ENCODE measurements at regions of chr5 and their contacts with region 1.

Region 1: GRCh38 chr5:121218086-121218485 is 633.6 kb upstream of the FTMT start:
- DNase-seq: no peak
- H3K4me3 ChIP-seq: no peak overlapping the region
- H3K27ac ChIP-seq: no peak overlapping the region
- H3K4me1 ChIP-seq: no peaks in the 10 kb centered on the region
- H3K27me3 ChIP-seq: no peaks in the 10 kb centered on the region
- CTCF ChIP-seq: no peak
- EP300 ChIP-seq: no peak
- POLR2A ChIP-seq: no peak

Region 2: GRCh38 chr5:121239951-121240350 is 21.9 kb after region 1 on chr5:
- intact Hi-C with region 1: loop called (anchors 2 kb)
- DNase-seq: no peak
- H3K4me3 ChIP-seq: no peak overlapping the region
- H3K27ac ChIP-seq: no peak overlapping the region
- H3K4me1 ChIP-seq: no peaks in the 10 kb centered on the region
- H3K27me3 ChIP-seq: no peaks in the 10 kb centered on the region
- CTCF ChIP-seq: no peak
- EP300 ChIP-seq: no peak
- POLR2A ChIP-seq: no peak

Region 3: DNA sequence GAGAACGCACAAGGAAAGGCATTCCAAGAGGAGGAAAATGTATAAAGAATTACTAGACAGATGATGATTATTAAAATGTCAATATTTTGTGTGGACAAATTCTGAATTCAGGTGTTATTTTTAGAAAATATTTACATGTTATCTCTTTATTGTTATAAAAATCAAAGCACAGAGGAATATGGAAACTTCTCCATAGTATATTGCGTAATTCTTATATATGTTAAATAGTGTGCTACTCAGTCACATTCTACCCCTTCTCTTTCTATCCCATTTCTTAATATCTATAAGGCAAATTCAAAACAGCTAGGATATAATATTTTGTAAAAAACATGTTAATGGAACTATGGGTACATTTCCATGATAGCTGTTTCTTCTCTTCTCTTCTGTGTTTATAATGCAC is 86.7 kb after region 1 on chr5:
- intact Hi-C with region 1: no loop called
- DNase-seq: no peak
- H3K4me3 ChIP-seq: no peak overlapping the region
- H3K27ac ChIP-seq: no peak overlapping the region
- H3K4me1 ChIP-seq: no peaks in the 10 kb centered on the region
- H3K27me3 ChIP-seq: no peaks in the 10 kb centered on the region
- CTCF ChIP-seq: no peak
- EP300 ChIP-seq: no peak
- POLR2A ChIP-seq: no peak

Region 4: DNA sequence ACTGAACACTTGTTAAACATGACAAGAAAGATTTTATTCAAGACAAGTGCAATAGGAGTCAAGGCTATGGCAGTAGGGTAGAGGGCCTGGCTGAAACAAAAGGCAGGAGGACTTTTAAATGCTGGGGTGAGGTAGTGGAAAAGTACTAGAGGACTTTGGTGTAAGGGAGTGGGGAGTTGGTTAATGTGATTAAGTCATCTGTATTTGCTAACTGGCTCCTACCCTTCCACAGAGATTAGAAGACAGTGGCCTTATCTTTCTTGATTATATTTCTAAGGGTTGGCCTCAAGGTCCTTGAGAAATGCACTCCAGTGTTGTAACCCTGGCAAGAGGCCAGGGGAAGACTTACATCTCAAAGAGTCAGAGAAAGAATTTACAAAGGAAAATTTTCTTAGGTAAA is 473.4 kb after region 1 on chr5:
- intact Hi-C with region 1: no loop called
- DNase-seq: no peak
- H3K4me3 ChIP-seq: no peak overlapping the region
- H3K27ac ChIP-seq: no peak overlapping the region
- H3K4me1 ChIP-seq: no peaks in the 10 kb centered on the region
- H3K27me3 ChIP-seq: peaks cover 0 to 4% (median 0%) of the 10 kb centered on the region in 3 donors
- CTCF ChIP-seq: no peak
- EP300 ChIP-seq: no peak
- POLR2A ChIP-seq: no peak

Measured in sigmoid colon (tissue), 7 donors.